ENCODE measurements at regions of chr18 and their contacts with region 1.

Region 1: DNA sequence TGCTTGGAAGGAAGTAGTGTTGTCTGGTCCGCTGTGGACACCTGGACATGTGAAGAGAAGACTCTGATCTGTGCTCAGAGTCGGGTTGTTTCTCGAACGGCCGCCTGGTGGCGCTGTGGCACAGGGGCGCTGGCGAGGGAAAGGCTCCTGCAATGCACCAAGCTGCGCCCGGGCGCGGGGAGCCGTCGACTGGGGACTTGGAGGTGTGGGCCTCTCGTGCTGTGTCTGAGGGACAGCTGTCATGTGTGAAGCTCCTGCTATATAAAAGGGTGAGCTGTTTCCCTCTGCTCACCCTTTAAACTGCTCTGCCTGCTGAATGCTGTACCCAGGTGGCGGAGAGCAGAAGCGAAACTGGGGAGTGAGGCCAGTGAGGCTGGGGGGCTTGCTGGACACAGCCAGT is 44.0 kb downstream of the GNAL start:
- DNase-seq: peak; percentile 50 to 80
- ATAC-seq: peak; percentile 94

Region 2: GRCh38 chr18:12049978-12050811 is 317.2 kb after region 1 on chr18:
- intact Hi-C with region 1: loop called in 1 of 2 experiments (anchors 10 kb)
- DNase-seq: peak in 1 of 2 donors; percentile 17
- ATAC-seq: no peak